Caco-2 (cell line): ENCODE measurements at regions of chr6 and their contacts with region 1.

Region 1: DNA sequence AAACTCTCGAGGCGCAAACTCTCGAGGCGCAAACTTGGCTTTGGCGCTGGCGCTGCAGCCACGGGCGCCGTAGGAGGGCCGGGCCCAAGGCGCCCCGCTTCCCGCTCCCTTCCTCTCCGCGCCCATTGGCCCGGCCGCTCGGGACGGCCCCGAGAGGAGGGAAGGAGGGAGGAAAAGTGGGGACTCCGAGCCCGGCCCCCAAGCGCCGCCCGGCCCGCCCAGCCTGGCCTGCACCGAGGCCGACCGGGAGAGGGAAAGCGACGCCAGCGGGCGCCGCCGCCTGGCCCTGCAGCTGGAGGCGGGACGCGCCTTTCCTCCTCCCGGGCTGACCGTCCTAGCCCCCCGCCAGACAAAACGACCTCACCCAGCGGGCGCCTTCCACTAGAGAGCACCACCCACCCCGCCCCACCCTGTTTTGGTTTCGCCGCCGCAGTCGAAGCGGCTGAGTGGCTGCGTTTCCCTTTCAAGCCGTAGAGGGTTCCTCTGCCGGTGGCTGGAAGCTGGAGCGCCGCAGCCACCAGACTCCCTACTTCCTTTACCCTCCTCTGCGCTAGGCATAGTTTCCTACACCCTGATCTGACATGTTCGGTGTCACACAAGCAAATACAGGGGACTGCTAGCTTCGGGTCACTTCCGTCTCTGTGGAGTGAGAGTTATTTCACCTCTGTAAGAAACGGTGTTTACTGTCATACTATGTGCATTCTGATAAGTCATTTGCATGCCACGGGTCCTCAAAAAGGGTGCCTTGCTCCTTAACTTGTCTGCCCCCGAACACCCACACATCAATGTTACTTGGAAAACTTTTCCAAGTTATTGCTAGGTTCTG is at the start of gene MBOAT1:
- DNase-seq: peak; percentile 91 to 93
- H3K4me3 ChIP-seq: peak within 1 kb of the TSS; percentile 83
- H3K4me3 Mint-ChIP-seq: peak within 1 kb of the TSS; percentile 90
- H3K27ac Mint-ChIP-seq: peak within 1 kb of the TSS; percentile 95
- H3K4me1 ChIP-seq: peaks cover 3% of the 10 kb centered on the region; the same call in 1 of the 2 replicates
- H3K4me1 Mint-ChIP-seq: peaks cover 15% of the 10 kb centered on the region
- H3K27me3 ChIP-seq: no peaks in the 10 kb centered on the region
- H3K27me3 Mint-ChIP-seq: no peaks in the 10 kb centered on the region
- CTCF ChIP-seq: peak in 1 of 2 experiments; percentile 15
- total RNA-seq, gene MBOAT1: 6.8 and 7.3 TPM in 2 replicates

Region 2: DNA sequence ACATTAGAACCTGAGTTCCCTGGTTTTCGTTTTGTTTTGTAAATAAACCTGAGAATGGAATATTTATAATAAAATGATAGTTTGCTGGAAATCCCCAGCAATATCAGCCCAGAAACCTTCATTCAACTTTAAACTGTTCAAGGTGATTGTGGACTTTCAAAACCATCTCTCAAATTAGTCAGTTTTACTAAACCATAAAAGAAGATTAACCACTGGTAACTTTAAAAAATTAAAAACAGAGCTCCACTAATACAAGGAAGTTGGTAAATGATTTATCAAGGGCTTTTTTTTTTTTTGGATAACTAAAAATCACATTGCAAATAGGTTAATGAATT is 10.3 kb before region 1 on chr6:
- CTCF ChIA-PET with region 1: interaction called, 5 read pairs
- POLR2A ChIA-PET with region 1: no interaction called
- intact Hi-C with region 1: loop called (anchors 1 kb)
- DNase-seq: no peak
- H3K4me3 ChIP-seq: no peak overlapping the region
- H3K4me3 Mint-ChIP-seq: no peak overlapping the region
- H3K27ac Mint-ChIP-seq: no peak overlapping the region
- H3K4me1 ChIP-seq: no peaks in the 10 kb centered on the region
- H3K4me1 Mint-ChIP-seq: peaks cover 9% of the 10 kb centered on the region
- H3K27me3 ChIP-seq: no peaks in the 10 kb centered on the region
- H3K27me3 Mint-ChIP-seq: no peaks in the 10 kb centered on the region
- CTCF ChIP-seq: no peak

Region 3: DNA sequence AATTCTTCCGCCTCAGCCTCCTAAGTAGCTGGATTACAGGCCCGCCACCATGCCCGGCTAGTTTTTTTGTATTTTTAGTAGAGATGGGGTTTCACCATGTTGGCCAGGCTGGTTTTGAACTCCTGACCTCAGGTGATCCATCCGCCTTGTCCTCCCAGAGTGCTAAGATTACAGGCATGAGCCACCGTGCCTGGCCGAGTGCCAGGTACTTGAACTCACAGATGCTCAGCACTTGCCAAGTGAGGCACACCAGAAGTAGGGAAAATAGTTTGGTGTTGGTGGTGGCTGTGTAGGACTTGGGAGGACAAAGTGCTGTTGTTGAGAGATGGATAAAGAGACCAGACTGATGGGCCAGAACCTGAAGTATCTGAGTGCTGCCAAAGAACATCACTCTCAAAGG is 39.7 kb after region 1 on chr6:
- CTCF ChIA-PET with region 1: no interaction called
- POLR2A ChIA-PET with region 1: interaction called, 11 read pairs
- intact Hi-C with region 1: no loop called
- DNase-seq: no peak
- H3K4me3 ChIP-seq: no peak overlapping the region
- H3K4me3 Mint-ChIP-seq: no peak overlapping the region
- H3K27ac Mint-ChIP-seq: no peak overlapping the region
- H3K4me1 ChIP-seq: no peaks in the 10 kb centered on the region
- H3K4me1 Mint-ChIP-seq: no peaks in the 10 kb centered on the region
- H3K27me3 ChIP-seq: no peaks in the 10 kb centered on the region
- H3K27me3 Mint-ChIP-seq: no peaks in the 10 kb centered on the region
- CTCF ChIP-seq: no peak

Region 4: DNA sequence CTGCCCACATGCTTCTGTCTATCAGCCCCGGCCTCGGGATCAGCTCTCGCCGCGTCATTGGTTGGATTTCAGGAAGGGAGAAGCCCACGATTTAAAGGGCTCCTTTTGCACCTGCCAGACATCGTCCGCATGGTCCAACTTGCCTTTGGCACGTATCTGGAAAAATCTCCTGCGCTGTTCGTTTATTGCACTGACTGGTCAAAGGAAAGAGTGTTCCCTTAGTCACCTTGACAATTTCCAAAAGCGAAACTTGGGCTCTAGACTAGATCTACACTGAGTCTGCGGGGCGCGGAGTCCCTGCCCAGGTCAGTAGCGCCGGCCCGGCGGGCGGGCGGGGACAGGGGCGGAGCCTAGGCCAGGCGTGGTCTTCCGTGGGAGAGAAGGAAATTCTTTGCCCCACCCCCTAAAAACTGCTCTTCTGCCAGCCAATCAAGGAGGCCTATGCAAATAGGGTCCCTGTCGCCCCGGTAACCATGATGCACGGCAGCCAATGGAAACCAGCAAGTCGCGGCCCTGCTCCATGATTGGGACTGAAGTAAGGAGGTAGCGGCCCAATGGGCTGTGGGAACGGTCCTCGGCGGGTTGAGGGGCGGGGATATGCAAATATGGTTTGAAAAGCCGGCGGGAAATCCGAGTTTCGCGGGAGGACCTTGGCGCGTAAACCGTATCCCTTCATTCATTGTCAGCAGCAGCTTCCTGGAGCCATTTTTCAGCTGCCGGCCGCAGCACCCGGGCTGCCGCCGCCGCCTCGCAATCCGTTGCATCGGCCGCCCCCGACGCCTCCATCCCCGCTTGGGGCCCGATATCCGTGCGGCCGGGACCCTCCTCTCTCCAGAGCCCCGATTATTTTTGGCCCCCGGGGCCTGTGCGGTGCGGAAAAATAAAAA is 188.8 kb after region 1 on chr6 and contains the start of gene E2F3:
- CTCF ChIA-PET with region 1: no interaction called
- POLR2A ChIA-PET with region 1: interaction called, 7 read pairs
- intact Hi-C with region 1: loop called (anchors 1 kb)
- DNase-seq: peak; percentile 99 to 100
- H3K4me3 ChIP-seq: peak within 1 kb of the TSS; percentile 91
- H3K4me3 Mint-ChIP-seq: peak within 1 kb of the TSS; percentile 91
- H3K27ac Mint-ChIP-seq: peak within 1 kb of the TSS; percentile 97
- H3K4me1 ChIP-seq: peaks cover 7% of the 10 kb centered on the region
- H3K4me1 Mint-ChIP-seq: no peaks in the 10 kb centered on the region
- H3K27me3 ChIP-seq: no peaks in the 10 kb centered on the region
- H3K27me3 Mint-ChIP-seq: no peaks in the 10 kb centered on the region
- CTCF ChIP-seq: no peak
- total RNA-seq, gene E2F3: 15.4 and 16.3 TPM in 2 replicates